ENCODE measurements at regions of chr19 and their contacts with region 1.

Region 1: GRCh38 chr19:11374433-11375142 is at the start of gene SWSAP1:
- DNase-seq: peak; percentile 94 to 99 (median 97)
- ATAC-seq: peak; percentile 89 to 91 (median 90)
- H3K4me3 ChIP-seq: peak within 1 kb of the TSS; percentile 76 to 79
- H3K4me3 Mint-ChIP-seq: no peak within 1 kb of the TSS
- H3K27ac ChIP-seq: peak within 1 kb of the TSS; percentile 95
- H3K27ac Mint-ChIP-seq: no peak within 1 kb of the TSS
- H3K4me1 ChIP-seq: peaks cover 11 to 39% of the 10 kb centered on the region in 2 experiments
- H3K4me1 Mint-ChIP-seq: peaks cover 23 to 32% (median 26%) of the 10 kb centered on the region in 3 donors
- H3K27me3 ChIP-seq: no peaks in the 10 kb centered on the region
- H3K27me3 Mint-ChIP-seq: no peaks in the 10 kb centered on the region
- total RNA-seq, gene SWSAP1: 1.6 to 5.5 (median 4.3) TPM

Region 2: DNA sequence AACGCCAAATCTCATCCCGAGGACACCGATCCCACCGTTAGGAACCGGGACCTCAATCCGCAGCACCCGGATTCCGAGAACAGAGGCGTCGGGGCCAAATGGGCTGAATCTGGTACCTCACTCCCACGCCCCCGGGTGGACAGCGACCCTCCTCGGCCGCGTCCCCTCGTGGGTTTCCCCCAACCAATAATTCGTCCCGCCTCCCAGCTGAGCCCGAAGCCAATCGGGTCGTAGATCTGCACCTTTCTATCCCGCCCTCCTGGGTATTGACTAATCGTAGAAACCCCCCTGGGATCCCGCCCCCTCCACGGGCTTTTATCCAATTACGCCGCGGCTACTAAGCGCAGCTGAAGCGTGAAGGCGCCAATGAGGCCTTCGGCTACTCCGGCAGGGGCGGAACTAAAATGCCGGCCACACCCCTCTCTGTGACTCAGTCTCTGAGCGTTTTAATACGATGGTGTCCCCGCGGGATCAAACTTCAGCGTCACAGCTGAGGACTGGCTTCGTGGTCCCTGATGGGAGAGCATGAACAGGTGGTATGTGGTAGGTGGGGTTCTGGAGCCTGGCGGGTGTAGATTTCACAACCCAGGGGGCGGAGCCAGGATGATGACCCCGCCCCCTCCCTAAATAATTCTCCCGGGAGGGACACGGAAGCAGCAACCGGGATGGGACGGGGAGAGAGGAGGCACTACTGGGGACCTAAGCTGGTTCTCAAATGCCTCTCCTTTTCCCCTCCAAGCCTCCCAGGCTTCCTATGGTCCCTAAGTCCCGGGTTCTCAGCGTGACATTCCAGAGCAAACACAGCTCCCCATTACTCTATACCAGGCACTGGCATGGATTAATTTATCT is 28.3 kb before region 1 on chr19 and contains the starts of genes CCDC159 and TMEM205:
- CTCF ChIA-PET with region 1: interaction called in 1 of 2 experiments, 13 read pairs
- POLR2A ChIA-PET with region 1: interaction called, 4 to 5 read pairs
- DNase-seq: peak; percentile 89 to 100 (median 99)
- ATAC-seq: peak; percentile 95 to 100 (median 99)
- H3K4me3 ChIP-seq: peak within 1 kb of the TSS; percentile 84 to 91
- H3K4me3 Mint-ChIP-seq: peak within 1 kb of the TSS; percentile 93 to 97 (median 97)
- H3K27ac ChIP-seq: peak within 1 kb of the TSS; percentile 82
- H3K27ac Mint-ChIP-seq: peak within 1 kb of the TSS; percentile 89 to 95
- H3K4me1 ChIP-seq: peaks cover 4 to 27% of the 10 kb centered on the region in 2 experiments
- H3K4me1 Mint-ChIP-seq: peaks cover 27 to 33% (median 28%) of the 10 kb centered on the region in 3 donors
- H3K27me3 ChIP-seq: peaks cover 0 to 3% of the 10 kb centered on the region in 2 experiments
- H3K27me3 Mint-ChIP-seq: no peaks in the 10 kb centered on the region
- total RNA-seq, gene CCDC159: 59.7 to 81.8 (median 69.6) TPM
- total RNA-seq, gene TMEM205: 15.6 to 32.9 (median 27.0) TPM

Region 3: GRCh38 chr19:11397089-11397610 is 22.6 kb after region 1 on chr19:
- CTCF ChIA-PET with region 1: no interaction called
- POLR2A ChIA-PET with region 1: no interaction called
- DNase-seq: no peak
- ATAC-seq: no peak
- H3K4me3 ChIP-seq: no peak overlapping the region
- H3K4me3 Mint-ChIP-seq: no peak overlapping the region
- H3K27ac ChIP-seq: no peak overlapping the region
- H3K27ac Mint-ChIP-seq: no peak overlapping the region
- H3K4me1 ChIP-seq: no peaks in the 10 kb centered on the region
- H3K4me1 Mint-ChIP-seq: peaks cover 0 to 4% (median 0%) of the 10 kb centered on the region in 3 donors
- H3K27me3 ChIP-seq: peaks cover 0 to 15% of the 10 kb centered on the region in 2 experiments
- H3K27me3 Mint-ChIP-seq: peaks cover 6 to 10% of the 10 kb centered on the region in 2 donors

Region 4: GRCh38 chr19:11435058-11435832 is 60.7 kb after region 1 on chr19 and contains the starts of genes ODAD3 and PRKCSH:
- CTCF ChIA-PET with region 1: interaction called in 1 of 2 experiments, 24 read pairs
- POLR2A ChIA-PET with region 1: interaction called in 1 of 2 experiments, 5 read pairs
- DNase-seq: peak; percentile 91 to 99 (median 96)
- ATAC-seq: peak; percentile 93 to 97 (median 95)
- H3K4me3 ChIP-seq: peak within 1 kb of the TSS; percentile 92 to 96
- H3K4me3 Mint-ChIP-seq: peak within 1 kb of the TSS; percentile 98 to 99 (median 99)
- H3K27ac ChIP-seq: peak within 1 kb of the TSS; percentile 75
- H3K27ac Mint-ChIP-seq: peak within 1 kb of the TSS; percentile 94 to 98
- H3K4me1 ChIP-seq: peaks cover 6 to 27% of the 10 kb centered on the region in 2 experiments
- H3K4me1 Mint-ChIP-seq: peaks cover 23 to 31% (median 25%) of the 10 kb centered on the region in 3 donors
- H3K27me3 ChIP-seq: peaks cover 0 to 9% of the 10 kb centered on the region in 2 experiments
- H3K27me3 Mint-ChIP-seq: peaks cover 0 to 6% of the 10 kb centered on the region in 2 donors
- total RNA-seq, gene ODAD3: 0.20 TPM in 1 of 5 donors, not detected in the others
- total RNA-seq, gene PRKCSH: 248 to 382 (median 334) TPM

Measured in T-cell (primary cell).